ENCODE measurements at regions of chr17 and their contacts with region 1.

Region 1: DNA sequence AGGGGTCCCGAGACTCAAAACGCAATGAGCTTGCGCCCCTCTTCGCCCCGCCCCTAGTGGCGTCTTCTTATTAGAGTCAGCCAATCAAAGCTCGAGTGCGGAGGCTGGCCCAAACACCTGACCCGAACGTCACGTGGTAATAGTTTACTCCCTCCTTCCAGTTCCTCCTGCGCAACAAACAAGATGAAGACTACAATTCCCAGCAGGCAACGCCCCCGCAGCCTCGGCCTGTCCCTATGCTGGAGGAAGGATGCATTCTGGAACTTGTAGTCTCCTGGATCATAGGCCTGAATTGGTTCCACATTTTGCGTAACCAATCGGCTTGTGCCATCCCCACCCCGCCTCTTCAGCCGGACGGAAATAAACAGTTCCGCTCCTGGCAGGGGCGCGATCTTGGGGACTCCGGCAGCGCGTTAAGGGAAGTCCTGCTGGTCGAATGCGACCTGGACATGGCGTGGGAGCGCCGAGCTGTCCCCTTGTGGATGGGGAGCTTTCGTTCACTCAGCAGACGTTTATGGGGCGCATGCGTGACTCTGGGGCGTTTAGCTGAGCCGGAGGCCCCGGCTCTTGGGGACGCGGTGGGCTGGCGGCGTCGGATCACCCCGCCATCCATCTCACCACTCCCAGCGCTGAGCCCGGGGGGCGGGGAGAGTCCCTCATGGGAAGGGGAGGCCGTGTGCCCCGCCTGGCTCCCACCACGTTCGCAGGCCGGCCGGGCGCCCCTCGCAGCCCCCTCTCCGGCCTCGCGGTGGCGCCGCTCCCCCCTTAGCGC is at the start of gene WBP2:
- DNase-seq: peak; percentile 97 to 99
- ATAC-seq: peak; percentile 97
- H3K4me3 ChIP-seq: peak within 1 kb of the TSS; percentile 84 to 89
- H3K27ac ChIP-seq: peak within 1 kb of the TSS; percentile 92 to 93
- H3K4me1 ChIP-seq: peaks cover 0 to 5% of the 10 kb centered on the region in 2 donors
- H3K27me3 ChIP-seq: no peaks in the 10 kb centered on the region
- total RNA-seq, gene WBP2: 104 to 122 TPM

Region 2: DNA sequence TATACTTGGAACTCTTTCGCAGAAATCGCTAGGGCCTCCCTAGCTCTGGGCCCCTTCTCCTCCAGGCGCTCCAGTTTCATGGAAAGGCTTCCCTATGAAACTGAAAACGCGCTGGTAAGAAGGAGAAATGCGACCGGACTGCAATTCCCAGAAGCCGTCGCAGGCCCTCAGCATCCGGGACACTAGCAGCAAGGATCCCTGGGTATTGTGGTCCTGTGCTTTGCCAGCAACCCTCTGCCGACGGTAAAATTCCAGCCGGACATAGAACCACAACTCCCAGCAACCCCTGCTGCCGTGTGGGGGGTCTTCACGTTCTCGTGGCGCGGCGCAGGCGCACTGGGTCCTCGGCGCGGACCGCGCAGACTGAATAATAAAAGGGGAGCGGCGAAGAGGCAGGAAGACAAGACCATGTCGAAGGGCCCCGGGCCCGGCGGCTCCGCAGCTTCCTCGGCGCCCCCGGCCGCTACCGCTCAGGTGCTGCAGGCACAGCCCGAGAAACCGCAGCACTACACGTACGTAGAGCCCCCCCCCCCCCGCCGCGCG is 71.0 kb before region 1 on chr17 and contains the start of gene UNK:
- intact Hi-C with region 1: loop called in 1 of 2 experiments (anchors 2 kb)
- DNase-seq: peak; percentile 98 to 99
- ATAC-seq: peak; percentile 96
- H3K4me3 ChIP-seq: peak within 1 kb of the TSS; percentile 48 to 63
- H3K27ac ChIP-seq: peak within 1 kb of the TSS; percentile 83 to 99
- H3K4me1 ChIP-seq: no peaks in the 10 kb centered on the region
- H3K27me3 ChIP-seq: peaks cover 0 to under 1% of the 10 kb centered on the region in 2 donors
- total RNA-seq, gene UNK: 28.9 to 34.1 TPM

Region 3: DNA sequence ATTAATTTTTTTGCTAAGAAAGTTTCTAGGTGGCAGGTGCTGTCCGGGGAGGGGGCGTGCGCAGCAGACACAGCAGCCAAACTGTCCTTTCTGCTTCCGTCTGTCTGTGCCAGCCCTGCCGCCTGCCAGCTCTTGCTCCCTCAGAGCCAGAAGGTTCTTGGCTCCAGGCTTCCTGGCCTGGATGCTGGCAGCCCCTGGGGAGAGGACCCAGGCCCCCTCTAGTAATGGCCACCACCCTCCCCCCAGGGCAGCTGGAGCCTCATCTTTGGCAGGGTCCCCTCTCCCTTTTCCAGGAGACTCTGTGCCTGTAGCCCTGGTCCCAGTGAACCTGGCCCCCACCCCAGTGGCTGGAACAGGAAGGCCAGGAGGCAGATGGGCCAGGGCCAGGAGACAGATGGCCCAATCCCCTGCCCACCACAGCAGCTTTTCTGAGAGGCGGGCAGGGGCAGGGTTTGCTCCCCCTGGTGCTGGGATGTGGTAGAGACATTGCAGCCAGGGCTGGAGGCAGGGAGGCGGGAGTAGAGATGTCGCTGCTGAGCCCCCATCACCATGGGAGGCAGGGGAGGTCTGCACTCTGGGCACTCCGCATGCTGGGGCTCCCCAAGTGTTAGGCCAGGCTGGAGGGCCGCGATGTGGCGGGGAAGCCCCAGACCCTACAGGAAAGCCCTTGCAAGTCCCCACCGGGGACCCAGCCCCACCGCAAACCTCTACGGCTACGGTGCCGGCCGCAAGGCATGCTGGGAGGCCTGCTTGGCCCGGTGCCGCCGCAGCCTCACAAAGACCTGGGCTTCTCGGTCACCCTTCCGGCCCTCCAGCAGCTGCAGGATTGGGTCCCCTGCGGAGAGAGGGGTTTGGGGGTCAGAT is 28.0 kb before region 1 on chr17:
- intact Hi-C with region 1: no loop called
- DNase-seq: peak; percentile 75 to 88
- ATAC-seq: peak; percentile 71
- H3K4me3 ChIP-seq: no peak overlapping the region
- H3K27ac ChIP-seq: peak overlapping the region in 1 of 2 donors; percentile 61
- H3K4me1 ChIP-seq: no peaks in the 10 kb centered on the region
- H3K27me3 ChIP-seq: no peaks in the 10 kb centered on the region

Region 4: GRCh38 chr17:75877752-75878173 is 22.3 kb after region 1 on chr17:
- intact Hi-C with region 1: loop called in 1 of 2 experiments (anchors 1 kb)
- DNase-seq: peak; percentile 84 to 92
- ATAC-seq: peak; percentile 64
- H3K4me3 ChIP-seq: peak overlapping the region; percentile 4 to 88
- H3K27ac ChIP-seq: peak overlapping the region; percentile 59 to 79
- H3K4me1 ChIP-seq: peaks cover 0 to 3% of the 10 kb centered on the region in 2 donors
- H3K27me3 ChIP-seq: no peaks in the 10 kb centered on the region

Region 5: GRCh38 chr17:75896415-75897159 is 41.1 kb after region 1 on chr17 and contains the start of gene TRIM65:
- intact Hi-C with region 1: loop called in 1 of 2 experiments (anchors 1 kb)
- DNase-seq: peak; percentile 92 to 97
- ATAC-seq: peak; percentile 88
- H3K4me3 ChIP-seq: peak within 1 kb of the TSS; percentile 69 to 84
- H3K27ac ChIP-seq: peak within 1 kb of the TSS; percentile 6 to 82
- H3K4me1 ChIP-seq: no peaks in the 10 kb centered on the region
- H3K27me3 ChIP-seq: no peaks in the 10 kb centered on the region
- total RNA-seq, gene TRIM65: 15.1 to 26.6 TPM

Region 6: GRCh38 chr17:75970011-75970523 is 114.6 kb after region 1 on chr17:
- intact Hi-C with region 1: no loop called
- DNase-seq: no peak
- ATAC-seq: no peak
- H3K4me3 ChIP-seq: no peak overlapping the region
- H3K27ac ChIP-seq: no peak overlapping the region
- H3K4me1 ChIP-seq: no peaks in the 10 kb centered on the region
- H3K27me3 ChIP-seq: no peaks in the 10 kb centered on the region

Measured in aorta (tissue), 5 donors.